Panc1 (cell line): ENCODE measurements at regions of chr6 and their contacts with region 1.

Region 1: GRCh38 chr6:109009236-109009961 is 85.2 kb downstream of the SESN1 start:
- DNase-seq: peak; percentile 48
- ATAC-seq: peak; percentile 100
- H3K4me3 ChIP-seq: peak overlapping the region; percentile 71 to 92
- H3K27ac ChIP-seq: peak overlapping the region; percentile 83
- H3K4me1 ChIP-seq: peaks cover 15% of the 10 kb centered on the region
- H3K27me3 ChIP-seq: no peaks in the 10 kb centered on the region
- CTCF ChIP-seq: no peak

Region 2: DNA sequence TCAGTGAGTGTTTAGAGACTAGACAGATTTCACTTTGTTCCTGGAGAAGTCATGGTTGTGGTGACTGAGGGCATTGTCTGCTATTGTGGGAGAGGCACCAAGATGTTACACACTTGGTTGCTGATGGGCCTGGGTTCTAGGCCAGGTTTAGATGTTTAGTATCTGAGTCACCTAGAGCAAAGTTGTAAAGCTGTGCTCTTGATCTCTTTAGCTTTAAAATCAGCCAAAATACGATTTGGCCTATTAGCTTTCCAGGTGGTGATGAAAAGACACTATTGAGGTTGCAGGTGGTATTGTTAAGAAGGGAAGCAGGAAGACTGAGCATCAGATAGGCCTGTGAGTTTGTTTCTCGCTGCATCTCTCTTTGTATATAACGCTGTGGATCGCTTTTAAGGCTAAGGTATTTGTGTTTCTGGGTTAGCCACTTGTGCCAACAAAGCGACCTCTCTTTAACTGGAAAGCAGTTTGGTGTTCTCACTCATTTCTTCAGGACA is 400.1 kb before region 1 on chr6:
- CTCF ChIA-PET with region 1: no interaction called
- POLR2A ChIA-PET with region 1: interaction called, 10 read pairs
- in situ Hi-C with region 1: no loop called
- intact Hi-C with region 1: no loop called
- DNase-seq: no peak
- ATAC-seq: peak; percentile 42; the same call in 1 of the 2 replicates
- H3K4me3 ChIP-seq: no peak overlapping the region
- H3K27ac ChIP-seq: no peak overlapping the region
- H3K4me1 ChIP-seq: peaks cover 18% of the 10 kb centered on the region
- H3K27me3 ChIP-seq: no peaks in the 10 kb centered on the region
- CTCF ChIP-seq: no peak

Region 3: GRCh38 chr6:109224116-109224875 is 214.9 kb after region 1 on chr6:
- CTCF ChIA-PET with region 1: no interaction called
- POLR2A ChIA-PET with region 1: no interaction called
- in situ Hi-C with region 1: no loop called
- intact Hi-C with region 1: no loop called
- DNase-seq: no peak
- ATAC-seq: no peak
- H3K4me3 ChIP-seq: no peak overlapping the region
- H3K27ac ChIP-seq: no peak overlapping the region
- H3K4me1 ChIP-seq: no peaks in the 10 kb centered on the region
- H3K27me3 ChIP-seq: peaks cover 3% of the 10 kb centered on the region; the same call in 1 of the 2 replicates
- CTCF ChIP-seq: no peak

Region 4: GRCh38 chr6:109389650-109390274 is 380.4 kb after region 1 on chr6:
- CTCF ChIA-PET with region 1: no interaction called
- POLR2A ChIA-PET with region 1: no interaction called
- in situ Hi-C with region 1: no loop called
- intact Hi-C with region 1: loop called (anchors 5 kb)
- DNase-seq: no peak
- ATAC-seq: no peak
- H3K4me3 ChIP-seq: no peak overlapping the region
- H3K27ac ChIP-seq: no peak overlapping the region
- H3K4me1 ChIP-seq: peaks cover 3% of the 10 kb centered on the region
- H3K27me3 ChIP-seq: no peaks in the 10 kb centered on the region
- CTCF ChIP-seq: no peak